ENCODE measurements at regions of chr1 and their contacts with region 1.

Region 1: DNA sequence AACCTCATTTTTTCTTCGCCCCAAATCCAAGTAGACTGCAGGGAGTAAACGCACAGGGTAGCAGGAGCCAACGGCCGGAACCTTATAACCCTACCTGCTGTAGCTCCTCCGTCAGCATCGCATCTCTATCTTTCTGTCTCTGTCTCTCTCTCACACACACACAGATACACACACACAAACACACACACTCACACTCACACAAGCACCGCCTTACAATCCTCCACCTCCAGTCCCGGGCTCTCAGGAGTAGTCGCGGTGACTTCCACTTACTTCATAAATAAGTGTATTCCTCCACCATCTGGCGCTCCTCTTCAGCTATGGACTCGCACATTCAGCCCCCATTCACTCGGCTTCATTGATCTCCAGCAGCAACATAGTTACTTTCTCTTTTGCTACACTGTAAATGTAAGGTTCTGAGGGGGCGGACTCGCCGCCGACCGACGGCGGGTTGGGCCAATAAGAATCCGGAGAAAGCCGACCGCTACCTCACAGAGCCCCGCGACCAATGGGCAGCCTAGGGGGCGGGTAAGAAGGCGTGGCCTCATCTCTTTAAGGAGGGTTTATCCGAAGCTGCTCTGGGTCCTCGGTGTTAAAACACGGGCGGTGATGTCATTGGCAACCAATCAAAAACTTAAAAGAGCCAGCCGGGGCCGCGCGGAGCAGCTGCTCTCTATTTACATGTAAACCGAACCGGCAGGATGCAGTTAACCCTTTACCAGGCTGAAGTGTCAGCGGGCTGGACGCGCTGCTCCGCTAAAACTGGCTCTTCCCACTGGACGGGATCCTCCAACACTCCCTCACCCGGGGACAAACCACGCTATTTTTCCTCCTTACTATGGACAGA is at the start of gene DUSP10:
- DNase-seq: peak; percentile 98 to 99
- H3K4me3 ChIP-seq: peak within 1 kb of the TSS; percentile 72
- H3K27ac ChIP-seq: peak within 1 kb of the TSS; percentile 88
- H3K4me1 ChIP-seq: peaks cover 26% of the 10 kb centered on the region
- H3K27me3 ChIP-seq: no peaks in the 10 kb centered on the region
- CTCF ChIP-seq: 0 out of 2 replicates have a peak, but pooled peaks have one; percentile 18
- total RNA-seq, gene DUSP10: 7.0 and 8.7 TPM in 2 replicates

Region 2: DNA sequence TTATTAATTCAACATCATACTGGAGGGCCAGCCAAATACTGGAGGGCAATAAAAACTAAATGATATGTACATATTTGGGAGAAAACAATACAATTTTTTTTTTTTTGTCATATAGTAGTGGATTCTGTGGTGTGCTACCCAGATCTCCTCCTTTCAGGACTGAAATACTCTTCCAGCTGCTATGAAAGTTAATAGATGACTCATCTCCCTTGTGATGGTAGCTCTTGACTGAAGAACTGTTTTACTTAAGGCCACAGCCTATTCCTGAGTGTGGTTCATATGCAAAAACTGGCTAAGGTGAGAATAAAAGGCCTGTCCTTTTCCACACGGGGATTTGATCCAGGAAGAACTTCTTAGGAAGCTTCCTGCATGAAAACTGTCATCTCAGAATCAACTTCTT is 554.8 kb before region 1 on chr1:
- CTCF ChIA-PET with region 1: no interaction called
- POLR2A ChIA-PET with region 1: no interaction called
- intact Hi-C with region 1: no loop called
- DNase-seq: no peak
- H3K4me3 ChIP-seq: no peak overlapping the region
- H3K27ac ChIP-seq: no peak overlapping the region
- H3K4me1 ChIP-seq: peaks cover 6% of the 10 kb centered on the region
- H3K27me3 ChIP-seq: no peaks in the 10 kb centered on the region
- CTCF ChIP-seq: no peak

Region 3: DNA sequence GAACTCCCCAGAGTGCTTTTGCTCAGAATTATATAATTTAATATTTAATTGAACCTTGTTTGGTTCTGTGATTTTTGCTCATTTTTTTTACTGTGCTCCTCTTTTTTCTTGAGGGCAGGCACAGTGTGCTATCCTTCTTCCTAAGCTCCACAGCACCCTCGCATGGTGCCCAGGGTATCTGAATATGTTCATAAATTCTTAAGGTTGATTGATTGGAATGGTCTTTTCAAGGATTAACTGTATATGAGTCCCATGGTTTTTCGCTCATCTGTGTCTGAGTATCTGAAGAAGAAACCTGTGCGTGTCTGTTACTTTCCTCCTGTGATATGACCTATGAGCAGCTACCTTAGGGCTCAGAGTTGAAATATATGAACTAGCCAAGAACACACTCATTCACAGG is 469.0 kb before region 1 on chr1:
- CTCF ChIA-PET with region 1: no interaction called
- POLR2A ChIA-PET with region 1: no interaction called
- intact Hi-C with region 1: no loop called
- DNase-seq: no peak
- H3K4me3 ChIP-seq: no peak overlapping the region
- H3K27ac ChIP-seq: no peak overlapping the region
- H3K4me1 ChIP-seq: no peaks in the 10 kb centered on the region
- H3K27me3 ChIP-seq: no peaks in the 10 kb centered on the region
- CTCF ChIP-seq: no peak; the same call in 1 of the 2 replicates

Region 4: GRCh38 chr1:221435504-221435904 is 306.4 kb before region 1 on chr1:
- CTCF ChIA-PET with region 1: no interaction called
- POLR2A ChIA-PET with region 1: no interaction called
- intact Hi-C with region 1: loop called (anchors 1 kb)
- DNase-seq: peak in 1 of 2 experiments; percentile 45
- H3K4me3 ChIP-seq: no peak overlapping the region
- H3K27ac ChIP-seq: no peak overlapping the region
- H3K4me1 ChIP-seq: peaks cover 20% of the 10 kb centered on the region
- H3K27me3 ChIP-seq: no peaks in the 10 kb centered on the region
- CTCF ChIP-seq: peak; percentile 98

Region 5: GRCh38 chr1:221470000-221470698 is 271.8 kb before region 1 on chr1:
- CTCF ChIA-PET with region 1: no interaction called
- POLR2A ChIA-PET with region 1: no interaction called
- intact Hi-C with region 1: no loop called
- DNase-seq: peak in 1 of 2 experiments; percentile 77
- H3K4me3 ChIP-seq: no peak overlapping the region
- H3K27ac ChIP-seq: no peak overlapping the region
- H3K4me1 ChIP-seq: no peaks in the 10 kb centered on the region
- H3K27me3 ChIP-seq: no peaks in the 10 kb centered on the region
- CTCF ChIP-seq: no peak

Region 6: GRCh38 chr1:221729771-221730330 is 12.1 kb before region 1 on chr1:
- CTCF ChIA-PET with region 1: interaction called, 10 read pairs
- POLR2A ChIA-PET with region 1: interaction called, 4 read pairs
- intact Hi-C with region 1: no loop called
- DNase-seq: no peak
- H3K4me3 ChIP-seq: no peak overlapping the region
- H3K27ac ChIP-seq: no peak overlapping the region
- H3K4me1 ChIP-seq: no peaks in the 10 kb centered on the region
- H3K27me3 ChIP-seq: no peaks in the 10 kb centered on the region
- CTCF ChIP-seq: no peak

Region 7: DNA sequence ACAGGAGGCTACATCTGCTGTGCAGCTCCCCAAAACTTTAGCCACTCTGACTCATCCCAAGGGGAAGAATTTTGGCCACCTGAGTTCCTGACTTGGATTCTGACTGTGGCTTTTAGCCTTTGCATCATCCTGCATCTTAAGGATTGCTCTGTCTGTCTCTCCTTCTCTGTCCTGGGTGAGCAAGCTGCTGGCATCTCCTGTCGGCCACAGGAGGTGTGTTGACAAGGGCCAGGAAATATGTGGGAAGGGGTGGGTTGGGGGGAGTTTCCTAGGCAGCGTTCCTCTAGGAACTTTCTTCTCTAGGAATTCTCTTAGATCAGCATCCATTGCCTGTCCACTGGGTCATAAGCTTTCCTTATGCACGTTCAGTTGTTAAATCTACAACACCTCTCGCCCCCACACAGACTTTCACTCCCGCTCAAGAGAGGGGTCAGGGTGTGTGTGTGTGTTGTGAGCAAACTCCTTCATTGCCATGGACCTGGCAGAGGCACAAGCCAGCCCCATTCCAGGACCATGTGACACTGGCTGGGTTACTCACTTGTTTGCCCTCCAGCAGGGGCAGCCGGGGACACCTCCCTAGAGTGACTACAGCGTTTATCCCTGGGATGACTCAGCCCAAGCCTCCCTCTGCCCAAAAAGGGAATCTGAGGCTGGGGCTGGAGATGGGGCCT is 144.9 kb after region 1 on chr1:
- CTCF ChIA-PET with region 1: no interaction called
- POLR2A ChIA-PET with region 1: interaction called, 14 read pairs
- intact Hi-C with region 1: loop called (anchors 1 kb)
- DNase-seq: peak; percentile 97 to 99
- H3K4me3 ChIP-seq: no peak overlapping the region; the same call in 1 of the 2 replicates
- H3K27ac ChIP-seq: peak overlapping the region; percentile 84
- H3K4me1 ChIP-seq: peaks cover 47% of the 10 kb centered on the region
- H3K27me3 ChIP-seq: no peaks in the 10 kb centered on the region
- CTCF ChIP-seq: no peak

Region 8: DNA sequence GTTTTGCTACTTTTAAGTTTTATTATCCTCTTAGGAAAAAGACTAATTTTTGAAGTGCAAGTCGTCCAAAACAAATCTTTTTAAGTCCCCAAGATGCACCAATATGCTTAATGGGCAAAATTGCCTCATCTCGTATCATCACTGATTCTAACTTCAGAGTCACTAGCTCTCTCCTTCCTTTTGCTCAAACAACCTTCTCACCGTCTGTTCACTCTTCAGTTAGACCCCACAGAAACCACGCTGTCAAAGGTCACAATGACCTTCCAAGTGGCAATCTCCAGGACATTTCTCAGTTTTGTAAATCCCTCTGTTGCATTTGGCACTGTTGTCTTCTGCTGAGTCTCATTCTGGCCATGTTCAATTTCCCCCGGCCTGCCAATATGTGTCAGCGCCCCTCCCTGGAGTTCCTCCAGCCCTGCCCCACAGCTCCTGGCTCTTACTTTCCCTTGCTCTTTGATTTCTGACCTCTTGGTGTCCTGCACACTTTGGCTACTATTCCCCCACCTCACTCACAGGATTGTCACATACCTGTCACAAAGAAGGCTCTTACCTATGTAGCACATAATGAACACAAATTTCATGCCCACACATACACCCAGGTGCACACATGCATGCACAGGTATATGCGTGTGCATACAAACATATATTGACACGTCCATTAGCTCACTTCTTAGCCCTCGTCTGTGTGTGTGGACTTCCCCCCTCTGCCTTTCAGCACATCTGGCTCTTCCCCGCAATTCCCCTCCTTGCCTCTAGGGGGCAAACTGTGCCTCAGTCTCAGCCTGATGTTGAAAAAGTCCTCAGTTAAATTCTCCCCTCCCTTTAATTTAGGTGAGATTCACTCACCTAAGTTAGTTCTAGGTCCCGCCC is 353.9 kb after region 1 on chr1:
- CTCF ChIA-PET with region 1: no interaction called
- POLR2A ChIA-PET with region 1: interaction called, 18 read pairs
- intact Hi-C with region 1: no loop called
- DNase-seq: peak in 1 of 2 experiments; percentile 11
- H3K4me3 ChIP-seq: no peak overlapping the region
- H3K27ac ChIP-seq: no peak overlapping the region
- H3K4me1 ChIP-seq: peaks cover 12% of the 10 kb centered on the region
- H3K27me3 ChIP-seq: no peaks in the 10 kb centered on the region
- CTCF ChIP-seq: peak; percentile 84

Region 9: DNA sequence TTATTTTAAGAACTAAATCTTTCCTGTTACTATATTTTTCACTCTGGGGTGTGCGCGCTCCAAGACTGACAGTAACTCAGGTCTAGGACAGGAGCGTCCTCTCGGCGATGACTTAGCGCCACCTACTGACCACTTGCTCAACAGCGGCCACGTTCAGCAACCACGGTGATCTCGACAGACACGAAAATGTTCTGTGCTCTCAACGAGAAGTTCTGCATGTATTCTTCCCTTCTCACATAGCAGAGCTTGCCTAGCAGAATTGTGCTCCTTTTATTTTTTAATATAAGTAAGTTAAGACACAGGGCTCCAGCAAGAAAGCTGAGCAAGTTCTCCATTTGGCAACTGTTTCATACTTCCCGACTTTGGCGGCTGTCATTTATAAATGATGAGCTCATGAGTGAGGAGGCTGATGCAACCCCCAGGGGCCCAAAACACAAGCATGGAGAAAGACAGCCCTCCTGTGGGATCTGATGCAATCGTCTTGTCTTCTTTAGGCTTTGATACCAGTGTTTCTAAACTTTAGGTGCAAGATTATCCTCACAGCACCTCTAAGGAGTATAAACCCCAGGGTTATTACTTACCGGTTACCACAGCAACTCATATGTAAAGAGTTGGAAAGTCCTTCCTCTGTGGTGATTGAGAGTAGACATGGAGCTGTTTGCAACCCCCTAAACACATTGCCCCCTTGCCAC is 713.4 kb after region 1 on chr1:
- CTCF ChIA-PET with region 1: interaction called, 3 read pairs
- POLR2A ChIA-PET with region 1: interaction called, 5 read pairs
- intact Hi-C with region 1: loop called (anchors 1 kb)
- DNase-seq: peak; percentile 55 to 90
- H3K4me3 ChIP-seq: peak overlapping the region; percentile 42; the same call in 1 of the 2 replicates
- H3K27ac ChIP-seq: peak overlapping the region; percentile 30; the same call in 1 of the 2 replicates
- H3K4me1 ChIP-seq: 0 out of 2 replicates have a peak, but pooled peaks cover 10% of the 10 kb centered on the region
- H3K27me3 ChIP-seq: no peaks in the 10 kb centered on the region
- CTCF ChIP-seq: peak; percentile 97

Measured in PC-9 (cell line).